Activated CD4-positive, alpha-beta T cell treated with anti-CD3 and anti-CD28 coated beads, Interleukin-2, amount 10 ng/mL, durations not matched to agents 7 days and 5 days (primary cell): ENCODE measurements at regions of chr11 and their contacts with region 1.

Region 1: GRCh38 chr11:12087075-12088004 is 23.1 kb upstream of the MICAL2 start:
- DNase-seq: peak; percentile 70
- H3K4me3 Mint-ChIP-seq: peak overlapping the region; percentile 49
- H3K27ac Mint-ChIP-seq: peak overlapping the region; percentile 83
- H3K4me1 Mint-ChIP-seq: peaks cover 79% of the 10 kb centered on the region
- H3K27me3 Mint-ChIP-seq: no peaks in the 10 kb centered on the region

Region 2: GRCh38 chr11:12019337-12019736 is 68.0 kb before region 1 on chr11:
- CTCF ChIA-PET with region 1: no interaction called
- POLR2A ChIA-PET with region 1: no interaction called
- DNase-seq: no peak
- H3K4me3 Mint-ChIP-seq: no peak overlapping the region
- H3K27ac Mint-ChIP-seq: no peak overlapping the region
- H3K4me1 Mint-ChIP-seq: no peaks in the 10 kb centered on the region
- H3K27me3 Mint-ChIP-seq: peaks cover 54% of the 10 kb centered on the region

Region 3: DNA sequence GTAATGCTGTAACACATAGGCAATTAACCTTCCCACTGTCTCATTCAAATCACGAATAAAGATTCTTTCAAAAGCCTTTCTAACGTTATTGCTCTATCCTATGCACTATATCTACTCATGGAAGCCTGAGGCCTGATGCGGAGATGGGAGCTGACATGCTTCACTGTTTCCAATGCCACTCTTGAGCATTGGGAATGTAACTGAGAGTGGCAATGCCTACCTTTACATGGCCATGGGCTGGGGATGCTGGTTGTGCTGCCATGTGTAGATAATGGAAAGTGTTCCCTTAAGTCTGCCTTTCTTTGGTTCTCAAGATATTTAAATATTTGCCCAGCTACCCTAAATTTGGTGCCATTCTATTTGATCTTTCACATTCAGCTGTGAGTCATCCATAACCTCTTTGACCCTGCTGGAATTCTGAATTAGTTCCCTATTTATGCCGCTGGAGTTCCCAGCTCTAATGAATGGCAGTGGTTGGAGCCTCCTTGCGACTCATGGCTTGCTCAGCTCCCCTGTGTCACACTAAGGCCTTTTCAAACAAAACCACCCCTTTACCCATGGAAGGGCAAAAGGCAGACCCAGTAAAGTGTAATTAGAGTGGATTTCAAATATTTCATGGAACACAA is 57.5 kb before region 1 on chr11:
- CTCF ChIA-PET with region 1: no interaction called
- POLR2A ChIA-PET with region 1: no interaction called
- DNase-seq: no peak
- H3K4me3 Mint-ChIP-seq: no peak overlapping the region
- H3K27ac Mint-ChIP-seq: no peak overlapping the region
- H3K4me1 Mint-ChIP-seq: no peaks in the 10 kb centered on the region
- H3K27me3 Mint-ChIP-seq: peaks cover 7% of the 10 kb centered on the region

Region 4: DNA sequence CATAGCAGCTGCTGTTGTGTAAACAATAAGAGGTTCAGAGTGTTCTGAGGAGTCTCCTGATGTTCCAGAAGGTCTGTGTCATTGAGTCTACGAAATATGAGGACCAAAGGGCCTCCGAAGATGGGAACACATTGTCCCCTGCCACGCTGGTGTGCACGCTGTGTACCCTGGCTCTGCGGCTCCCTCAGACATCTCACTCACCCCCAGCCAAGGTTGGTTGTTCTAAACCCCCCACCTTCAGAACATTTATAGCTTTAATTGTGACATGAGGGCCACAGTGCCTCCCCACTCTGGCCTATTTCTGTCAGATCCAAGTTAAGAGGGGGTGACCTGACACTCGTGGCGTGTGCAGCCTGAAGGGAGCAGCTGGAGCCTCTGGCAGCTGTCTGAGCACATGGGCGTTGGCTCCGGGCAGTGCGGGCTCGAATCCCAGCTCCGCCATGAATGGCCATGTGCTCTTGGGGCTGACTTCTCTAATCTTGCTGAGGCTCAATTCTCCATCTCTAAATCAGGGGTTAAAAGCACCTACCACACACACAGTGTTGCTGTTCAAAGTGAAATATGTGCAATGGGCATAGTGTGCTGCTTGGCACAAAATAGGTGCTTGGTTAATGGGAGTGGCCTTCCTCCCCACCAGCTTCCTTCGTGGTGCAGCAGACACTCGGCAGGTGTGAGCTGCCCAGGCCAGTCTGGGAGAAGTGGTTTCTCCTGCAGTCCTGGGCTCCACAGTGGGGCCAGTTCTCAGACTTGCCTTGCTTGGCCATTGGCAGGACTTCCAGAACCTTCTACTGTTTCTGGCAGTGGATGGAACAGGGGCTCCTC is 16.7 kb before region 1 on chr11:
- CTCF ChIA-PET with region 1: interaction called, 27 read pairs
- POLR2A ChIA-PET with region 1: no interaction called
- DNase-seq: no peak
- H3K4me3 Mint-ChIP-seq: no peak overlapping the region
- H3K27ac Mint-ChIP-seq: no peak overlapping the region
- H3K4me1 Mint-ChIP-seq: peaks cover 5% of the 10 kb centered on the region
- H3K27me3 Mint-ChIP-seq: no peaks in the 10 kb centered on the region

Region 5: DNA sequence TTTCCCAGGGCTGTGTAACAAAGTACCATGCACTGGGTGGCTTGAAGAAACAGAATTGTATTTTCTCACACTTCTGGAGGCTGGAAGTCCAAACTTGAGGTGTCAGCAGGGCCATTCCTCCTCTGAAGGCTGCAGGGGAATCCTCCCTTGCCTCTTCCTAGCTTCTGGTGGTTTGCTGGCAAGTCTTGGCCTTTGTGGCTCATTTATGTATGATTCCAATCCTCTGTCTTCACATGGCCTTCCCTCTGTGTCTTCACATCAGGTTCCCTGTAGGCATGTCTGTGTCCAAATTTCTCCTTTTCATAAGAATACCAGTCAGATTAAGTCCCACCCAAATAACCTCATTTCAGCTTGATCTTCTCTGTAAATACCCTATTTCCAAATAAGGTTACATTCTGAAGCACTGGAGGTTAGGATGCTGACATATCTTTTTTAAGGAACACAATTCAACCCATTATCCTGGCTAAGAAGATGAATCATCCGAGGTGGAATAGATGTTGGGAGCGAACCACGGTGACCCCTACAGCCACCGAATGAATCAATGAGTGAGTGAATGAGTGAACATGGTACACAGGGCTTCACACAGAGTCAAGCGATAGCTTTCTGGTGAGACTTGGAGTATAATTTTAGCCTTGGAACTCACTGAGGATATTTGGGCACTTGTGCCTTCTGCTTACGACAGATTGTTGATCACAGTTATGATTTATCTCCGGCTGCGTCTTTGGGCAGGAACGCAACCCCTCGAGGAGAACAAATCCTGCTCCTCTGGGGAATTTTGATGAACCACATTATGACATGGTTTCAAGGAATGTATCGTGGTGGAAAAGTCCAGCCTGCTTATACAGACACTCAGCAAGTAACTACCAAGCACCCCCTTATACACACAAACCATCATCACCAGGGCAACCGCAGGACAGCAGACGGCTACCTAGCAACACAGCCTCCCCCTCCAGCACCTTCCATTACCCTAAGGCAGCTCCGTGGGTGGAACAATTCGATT is 11.2 kb before region 1 on chr11:
- CTCF ChIA-PET with region 1: interaction called, 27 read pairs
- POLR2A ChIA-PET with region 1: no interaction called
- DNase-seq: no peak
- H3K4me3 Mint-ChIP-seq: no peak overlapping the region
- H3K27ac Mint-ChIP-seq: no peak overlapping the region
- H3K4me1 Mint-ChIP-seq: peaks cover 7% of the 10 kb centered on the region
- H3K27me3 Mint-ChIP-seq: peaks cover 7% of the 10 kb centered on the region

Region 6: GRCh38 chr11:12100841-12101242 is 13.5 kb after region 1 on chr11:
- CTCF ChIA-PET with region 1: interaction called, 13 read pairs
- POLR2A ChIA-PET with region 1: no interaction called
- DNase-seq: no peak
- H3K4me3 Mint-ChIP-seq: no peak overlapping the region
- H3K27ac Mint-ChIP-seq: no peak overlapping the region
- H3K4me1 Mint-ChIP-seq: peaks cover 29% of the 10 kb centered on the region
- H3K27me3 Mint-ChIP-seq: peaks cover 14% of the 10 kb centered on the region

Region 7: GRCh38 chr11:12110201-12110713 is 22.9 kb after region 1 on chr11 and contains the start of gene MICAL2:
- CTCF ChIA-PET with region 1: interaction called, 11 read pairs
- POLR2A ChIA-PET with region 1: interaction called, 3 read pairs
- DNase-seq: peak; percentile 85
- H3K4me3 Mint-ChIP-seq: peak within 1 kb of the TSS; percentile 75
- H3K27ac Mint-ChIP-seq: peak within 1 kb of the TSS; percentile 87
- H3K4me1 Mint-ChIP-seq: peaks cover 48% of the 10 kb centered on the region
- H3K27me3 Mint-ChIP-seq: no peaks in the 10 kb centered on the region
- total RNA-seq, gene MICAL2: 45.5 to 47.3 TPM

Region 8: GRCh38 chr11:12159351-12160099 is 72.2 kb after region 1 on chr11:
- CTCF ChIA-PET with region 1: no interaction called
- POLR2A ChIA-PET with region 1: no interaction called
- DNase-seq: no peak
- H3K4me3 Mint-ChIP-seq: no peak overlapping the region
- H3K27ac Mint-ChIP-seq: no peak overlapping the region
- H3K4me1 Mint-ChIP-seq: peaks cover 66% of the 10 kb centered on the region
- H3K27me3 Mint-ChIP-seq: no peaks in the 10 kb centered on the region

Region 9: DNA sequence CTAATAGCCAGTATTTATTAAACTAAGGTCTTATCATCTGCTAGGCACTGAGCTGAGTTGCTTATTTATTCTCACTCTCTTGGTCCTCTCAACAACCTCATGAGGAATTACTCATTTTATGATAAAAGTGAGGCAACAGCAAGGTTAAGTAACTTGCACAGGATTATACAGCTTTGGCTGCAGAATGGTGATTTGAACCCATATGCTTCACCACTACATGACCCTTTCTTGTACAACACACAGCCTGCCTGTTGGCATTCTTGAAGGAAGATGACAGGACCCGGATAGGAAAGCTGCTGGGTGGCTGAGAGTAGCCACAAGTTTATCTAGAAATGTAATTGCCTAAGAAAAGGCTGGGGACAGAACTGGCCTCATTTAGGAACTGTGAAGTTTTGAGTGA is 284.8 kb after region 1 on chr11:
- CTCF ChIA-PET with region 1: no interaction called
- POLR2A ChIA-PET with region 1: no interaction called
- DNase-seq: no peak
- H3K4me3 Mint-ChIP-seq: no peak overlapping the region
- H3K27ac Mint-ChIP-seq: no peak overlapping the region
- H3K4me1 Mint-ChIP-seq: peaks cover 5% of the 10 kb centered on the region
- H3K27me3 Mint-ChIP-seq: peaks cover 64% of the 10 kb centered on the region